ENCODE measurements at regions of chr11 and their contacts with region 1.

Region 1: GRCh38 chr11:126989942-126990715 is 10.4 kb downstream of the KIRREL3 start:
- DNase-seq: peak; percentile 76
- H3K4me3 ChIP-seq: no peak overlapping the region
- H3K27ac ChIP-seq: no peak overlapping the region
- H3K4me1 ChIP-seq: no peaks in the 10 kb centered on the region
- H3K27me3 ChIP-seq: peaks cover 0 to 10% (median 0%) of the 10 kb centered on the region in 3 donors
- CTCF ChIP-seq: peak; percentile 57 to 91 (median 83)
- EP300 ChIP-seq: no peak
- POLR2A ChIP-seq: no peak

Region 2: GRCh38 chr11:126607374-126607773 is 382.8 kb before region 1 on chr11:
- intact Hi-C with region 1: loop called (anchors 5 kb)
- DNase-seq: no peak
- H3K4me3 ChIP-seq: no peak overlapping the region
- H3K27ac ChIP-seq: no peak overlapping the region
- H3K4me1 ChIP-seq: no peaks in the 10 kb centered on the region
- H3K27me3 ChIP-seq: peaks cover 0 to 34% (median 4%) of the 10 kb centered on the region in 3 donors
- CTCF ChIP-seq: peak in 3 of 4 experiments; percentile 22 to 45 (median 42)
- EP300 ChIP-seq: no peak
- POLR2A ChIP-seq: no peak

Region 3: GRCh38 chr11:126716456-126717083 is 273.6 kb before region 1 on chr11:
- intact Hi-C with region 1: loop called (anchors 2 kb)
- DNase-seq: no peak
- H3K4me3 ChIP-seq: no peak overlapping the region
- H3K27ac ChIP-seq: no peak overlapping the region
- H3K4me1 ChIP-seq: no peaks in the 10 kb centered on the region
- H3K27me3 ChIP-seq: no peaks in the 10 kb centered on the region
- CTCF ChIP-seq: peak in 2 of 4 experiments; percentile 19 to 34
- EP300 ChIP-seq: no peak
- POLR2A ChIP-seq: no peak

Region 4: GRCh38 chr11:127027789-127028188 is 37.7 kb after region 1 on chr11:
- intact Hi-C with region 1: no loop called
- DNase-seq: no peak
- H3K4me3 ChIP-seq: no peak overlapping the region
- H3K27ac ChIP-seq: no peak overlapping the region
- H3K4me1 ChIP-seq: no peaks in the 10 kb centered on the region
- H3K27me3 ChIP-seq: no peaks in the 10 kb centered on the region
- CTCF ChIP-seq: no peak
- EP300 ChIP-seq: no peak
- POLR2A ChIP-seq: no peak